CD8-positive, alpha-beta T cell (primary cell): ENCODE measurements at regions of chr5 and their contacts with region 1.

Region 1: GRCh38 chr5:140700177-140701144 is at the start of gene ZMAT2:
- DNase-seq: peak; percentile 84 to 98 (median 91)
- ATAC-seq: peak; percentile 99
- H3K4me3 ChIP-seq: peak within 1 kb of the TSS; percentile 66 to 72
- H3K4me3 Mint-ChIP-seq: peak within 1 kb of the TSS; percentile 95
- H3K27ac ChIP-seq: peak within 1 kb of the TSS; percentile 66 to 78
- H3K27ac Mint-ChIP-seq: peak within 1 kb of the TSS; percentile 96
- H3K4me1 ChIP-seq: peaks cover 13% of the 10 kb centered on the region
- H3K4me1 Mint-ChIP-seq: peaks cover 29% of the 10 kb centered on the region
- H3K27me3 ChIP-seq: no peaks in the 10 kb centered on the region
- H3K27me3 Mint-ChIP-seq: no peaks in the 10 kb centered on the region
- CTCF ChIP-seq: no peak
- total RNA-seq, gene ZMAT2: 31.8 to 36.6 TPM

Region 2: GRCh38 chr5:140547508-140548299 is 152.8 kb before region 1 on chr5 and contains the start of gene EIF4EBP3:
- CTCF ChIA-PET with region 1: no interaction called
- POLR2A ChIA-PET with region 1: interaction called, 5 read pairs
- intact Hi-C with region 1: loop called in 1 of 2 experiments (anchors 5 kb)
- DNase-seq: peak; percentile 74 to 94 (median 88)
- ATAC-seq: peak; percentile 97
- H3K4me3 ChIP-seq: peak within 1 kb of the TSS; percentile 69 to 96
- H3K4me3 Mint-ChIP-seq: peak within 1 kb of the TSS; percentile 90
- H3K27ac ChIP-seq: peak within 1 kb of the TSS; percentile 88 to 96
- H3K27ac Mint-ChIP-seq: peak within 1 kb of the TSS; percentile 98
- H3K4me1 ChIP-seq: peaks cover 21% of the 10 kb centered on the region
- H3K4me1 Mint-ChIP-seq: peaks cover 31% of the 10 kb centered on the region
- H3K27me3 ChIP-seq: no peaks in the 10 kb centered on the region
- H3K27me3 Mint-ChIP-seq: no peaks in the 10 kb centered on the region
- CTCF ChIP-seq: peak; percentile 72
- total RNA-seq, gene EIF4EBP3: 10.6 to 13.7 TPM

Region 3: DNA sequence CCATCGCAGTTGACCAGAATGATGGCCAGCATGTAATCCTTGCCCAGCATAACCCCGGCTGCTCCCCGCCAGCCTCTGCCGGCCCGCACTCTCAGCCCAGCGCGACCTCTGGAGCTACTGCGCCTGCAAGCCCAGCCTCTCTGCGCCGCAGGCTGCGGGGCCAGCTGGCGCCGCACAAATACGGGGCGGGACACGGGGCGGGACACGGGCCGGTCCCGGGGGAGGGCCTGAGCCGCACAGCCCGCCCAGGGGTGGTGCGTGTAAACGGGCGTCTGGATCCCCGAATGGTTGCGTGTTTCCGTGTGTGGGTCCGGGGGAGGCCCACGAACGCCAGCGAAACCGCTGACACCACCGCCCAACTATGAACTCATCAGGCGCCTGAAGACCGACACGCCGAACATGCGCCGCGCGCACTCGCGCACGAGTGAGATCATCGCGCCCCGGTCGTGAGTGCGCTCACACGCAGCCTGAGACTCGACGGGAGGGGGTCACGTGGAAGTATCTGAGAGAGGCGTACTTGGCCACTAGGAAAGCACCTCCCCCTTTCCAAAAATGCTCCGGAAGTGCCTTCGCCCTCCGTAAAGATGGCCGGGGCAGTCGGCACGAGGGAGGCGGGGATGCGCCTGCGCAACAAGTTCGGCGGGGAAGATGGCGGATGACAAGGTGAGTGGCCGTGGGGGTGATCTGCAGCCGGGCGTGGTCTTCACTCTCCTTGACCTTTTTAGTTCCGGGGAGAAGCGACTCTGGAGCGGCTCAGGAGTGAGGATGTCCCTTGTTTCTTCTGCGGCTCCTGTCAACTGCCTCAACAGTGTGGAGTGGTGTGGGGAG is 136.1 kb before region 1 on chr5 and contains the starts of genes APBB3 and SLC35A4:
- CTCF ChIA-PET with region 1: no interaction called
- POLR2A ChIA-PET with region 1: no interaction called
- intact Hi-C with region 1: loop called in 1 of 2 experiments (anchors 1 kb)
- DNase-seq: peak; percentile 92 to 100 (median 95)
- ATAC-seq: peak; percentile 88
- H3K4me3 ChIP-seq: peak within 1 kb of the TSS; percentile 52 to 79
- H3K4me3 Mint-ChIP-seq: peak within 1 kb of the TSS; percentile 88
- H3K27ac ChIP-seq: peak within 1 kb of the TSS; percentile 73 to 92
- H3K27ac Mint-ChIP-seq: peak within 1 kb of the TSS; percentile 94
- H3K4me1 ChIP-seq: peaks cover 30% of the 10 kb centered on the region
- H3K4me1 Mint-ChIP-seq: peaks cover 62% of the 10 kb centered on the region
- H3K27me3 ChIP-seq: no peaks in the 10 kb centered on the region
- H3K27me3 Mint-ChIP-seq: no peaks in the 10 kb centered on the region
- CTCF ChIP-seq: no peak
- total RNA-seq, gene APBB3: 51.0 to 51.7 TPM
- total RNA-seq, gene SLC35A4: 14.8 to 19.4 TPM

Region 4: GRCh38 chr5:140664359-140665119 is 35.9 kb before region 1 on chr5 and contains the start of gene WDR55:
- CTCF ChIA-PET with region 1: no interaction called
- POLR2A ChIA-PET with region 1: no interaction called
- intact Hi-C with region 1: loop called in 1 of 2 experiments (anchors 1 kb)
- DNase-seq: peak; percentile 90 to 98 (median 97)
- ATAC-seq: peak; percentile 92
- H3K4me3 ChIP-seq: peak within 1 kb of the TSS; percentile 80 to 95
- H3K4me3 Mint-ChIP-seq: peak within 1 kb of the TSS; percentile 89
- H3K27ac ChIP-seq: peak within 1 kb of the TSS; percentile 90 to 91
- H3K27ac Mint-ChIP-seq: peak within 1 kb of the TSS; percentile 96
- H3K4me1 ChIP-seq: peaks cover 15% of the 10 kb centered on the region
- H3K4me1 Mint-ChIP-seq: peaks cover 38% of the 10 kb centered on the region
- H3K27me3 ChIP-seq: no peaks in the 10 kb centered on the region
- H3K27me3 Mint-ChIP-seq: no peaks in the 10 kb centered on the region
- CTCF ChIP-seq: no peak
- total RNA-seq, gene WDR55: 45.4 to 49.2 TPM

Region 5: DNA sequence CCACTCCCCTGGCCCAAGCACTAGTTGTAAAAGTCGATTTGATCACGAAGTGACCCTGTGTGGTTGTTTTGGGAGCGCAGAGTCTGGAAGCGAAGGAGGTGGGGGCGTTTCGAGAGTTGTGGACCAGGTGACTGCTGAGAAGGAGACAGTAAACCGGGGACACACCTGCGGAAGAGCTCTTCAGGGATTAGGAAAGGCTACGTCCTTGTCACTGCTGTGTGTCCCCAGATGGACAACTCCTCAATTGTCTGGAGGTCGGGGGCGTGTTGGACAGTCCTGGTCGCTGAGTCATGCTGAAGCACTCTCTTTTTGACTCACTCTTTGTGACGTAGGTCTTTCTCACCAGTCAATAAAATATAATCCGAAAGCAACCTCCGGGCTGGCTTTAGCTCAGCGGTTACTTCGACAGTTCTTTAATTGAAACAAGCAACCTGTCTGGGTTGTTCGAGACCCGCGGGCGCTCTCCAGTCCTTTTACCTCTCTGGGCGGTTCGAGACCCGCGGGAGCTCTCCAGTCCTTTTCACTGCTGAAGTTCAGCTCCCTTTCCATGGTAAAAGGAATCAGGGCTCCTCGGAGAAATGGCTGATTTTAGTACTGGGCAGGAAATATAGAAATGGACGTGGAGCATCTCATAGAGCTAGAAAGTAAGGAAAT is 10.6 kb after region 1 on chr5:
- CTCF ChIA-PET with region 1: interaction called, 4 read pairs
- POLR2A ChIA-PET with region 1: interaction called, 21 read pairs
- intact Hi-C with region 1: loop called (anchors 1 kb)
- DNase-seq: peak; percentile 66 to 95 (median 85)
- ATAC-seq: peak; percentile 83
- H3K4me3 ChIP-seq: peak overlapping the region; percentile 58 to 74
- H3K4me3 Mint-ChIP-seq: peak overlapping the region; percentile 99
- H3K27ac ChIP-seq: peak overlapping the region; percentile 72 to 86
- H3K27ac Mint-ChIP-seq: peak overlapping the region; percentile 99
- H3K4me1 ChIP-seq: no peaks in the 10 kb centered on the region
- H3K4me1 Mint-ChIP-seq: peaks cover 16% of the 10 kb centered on the region
- H3K27me3 ChIP-seq: no peaks in the 10 kb centered on the region
- H3K27me3 Mint-ChIP-seq: no peaks in the 10 kb centered on the region
- CTCF ChIP-seq: no peak

Region 6: DNA sequence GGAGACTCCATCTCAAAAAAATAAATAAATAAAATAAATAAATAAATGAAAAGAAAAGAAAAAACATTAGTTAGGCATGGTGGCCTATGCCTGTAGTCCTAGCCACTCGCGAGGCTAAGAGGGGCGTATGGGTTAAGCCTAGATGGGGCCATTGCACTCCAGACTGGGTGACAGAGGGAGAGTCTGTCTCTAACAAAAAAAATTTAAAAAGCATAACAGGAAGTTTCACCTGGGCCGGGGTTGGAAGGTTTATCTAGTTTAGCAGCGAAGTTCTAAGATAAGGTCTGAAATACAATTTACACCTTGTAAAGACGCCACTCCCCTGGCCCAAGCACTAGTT is 17.8 kb after region 1 on chr5:
- CTCF ChIA-PET with region 1: interaction called, 10 read pairs
- POLR2A ChIA-PET with region 1: no interaction called
- intact Hi-C with region 1: no loop called
- DNase-seq: no peak
- ATAC-seq: no peak
- H3K4me3 ChIP-seq: no peak overlapping the region
- H3K4me3 Mint-ChIP-seq: no peak overlapping the region
- H3K27ac ChIP-seq: no peak overlapping the region
- H3K27ac Mint-ChIP-seq: no peak overlapping the region
- H3K4me1 ChIP-seq: no peaks in the 10 kb centered on the region
- H3K4me1 Mint-ChIP-seq: peaks cover 2% of the 10 kb centered on the region
- H3K27me3 ChIP-seq: no peaks in the 10 kb centered on the region
- H3K27me3 Mint-ChIP-seq: peaks cover 2% of the 10 kb centered on the region
- CTCF ChIP-seq: no peak

Region 7: DNA sequence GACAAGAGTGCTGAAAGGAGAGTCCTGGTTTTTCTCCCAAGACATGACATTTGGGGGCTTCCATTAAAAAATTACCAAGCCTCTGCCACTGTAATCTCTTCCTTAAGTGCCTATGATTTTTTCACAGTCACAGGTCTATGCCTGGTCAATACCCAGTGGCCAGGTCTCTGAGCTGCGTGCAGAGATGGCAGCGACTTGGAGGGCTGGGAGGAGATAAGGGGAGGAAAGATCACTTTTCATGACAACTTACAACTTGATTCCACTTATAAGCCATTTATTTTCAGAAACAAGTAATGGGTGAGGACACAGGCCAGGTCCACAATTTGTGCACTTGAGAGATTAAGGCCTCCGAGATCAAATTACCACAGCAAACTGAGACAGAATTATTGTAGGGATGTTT is 263.9 kb after region 1 on chr5:
- CTCF ChIA-PET with region 1: no interaction called
- POLR2A ChIA-PET with region 1: no interaction called
- intact Hi-C with region 1: no loop called
- DNase-seq: no peak
- ATAC-seq: no peak
- H3K4me3 ChIP-seq: no peak overlapping the region
- H3K4me3 Mint-ChIP-seq: no peak overlapping the region
- H3K27ac ChIP-seq: no peak overlapping the region
- H3K27ac Mint-ChIP-seq: no peak overlapping the region
- H3K4me1 ChIP-seq: no peaks in the 10 kb centered on the region
- H3K4me1 Mint-ChIP-seq: peaks cover 3% of the 10 kb centered on the region
- H3K27me3 ChIP-seq: no peaks in the 10 kb centered on the region
- H3K27me3 Mint-ChIP-seq: peaks cover 33% of the 10 kb centered on the region
- CTCF ChIP-seq: no peak

Region 8: GRCh38 chr5:141192110-141192732 is 491.8 kb after region 1 on chr5 and contains the start of gene PCDHB10:
- CTCF ChIA-PET with region 1: no interaction called
- POLR2A ChIA-PET with region 1: no interaction called
- intact Hi-C with region 1: no loop called
- DNase-seq: peak in 2 of 9 experiments; percentile 20 to 22
- ATAC-seq: no peak
- H3K4me3 ChIP-seq: no peak within 1 kb of the TSS
- H3K4me3 Mint-ChIP-seq: no peak within 1 kb of the TSS
- H3K27ac ChIP-seq: no peak within 1 kb of the TSS
- H3K27ac Mint-ChIP-seq: no peak within 1 kb of the TSS
- H3K4me1 ChIP-seq: no peaks in the 10 kb centered on the region
- H3K4me1 Mint-ChIP-seq: peaks cover under 1% of the 10 kb centered on the region
- H3K27me3 ChIP-seq: peaks cover 0 to 3% of the 10 kb centered on the region in 2 experiments
- H3K27me3 Mint-ChIP-seq: peaks cover 41% of the 10 kb centered on the region
- CTCF ChIP-seq: no peak
- total RNA-seq, gene PCDHB10: not detected

Region 9: GRCh38 chr5:141636413-141637122 is 936.1 kb after region 1 on chr5 and contains the starts of genes HDAC3 and RELL2:
- CTCF ChIA-PET with region 1: no interaction called
- POLR2A ChIA-PET with region 1: no interaction called
- intact Hi-C with region 1: loop called in 1 of 2 experiments (anchors 10 kb)
- DNase-seq: peak; percentile 88 to 97 (median 94)
- ATAC-seq: peak; percentile 89
- H3K4me3 ChIP-seq: peak within 1 kb of the TSS; percentile 98 to 99
- H3K4me3 Mint-ChIP-seq: peak within 1 kb of the TSS; percentile 92
- H3K27ac ChIP-seq: peak within 1 kb of the TSS; percentile 78 to 81
- H3K27ac Mint-ChIP-seq: peak within 1 kb of the TSS; percentile 89
- H3K4me1 ChIP-seq: peaks cover 28% of the 10 kb centered on the region
- H3K4me1 Mint-ChIP-seq: peaks cover 50% of the 10 kb centered on the region
- H3K27me3 ChIP-seq: no peaks in the 10 kb centered on the region
- H3K27me3 Mint-ChIP-seq: no peaks in the 10 kb centered on the region
- CTCF ChIP-seq: no peak
- total RNA-seq, gene HDAC3: 48.9 to 54.8 TPM
- total RNA-seq, gene RELL2: 9.5 to 9.8 TPM

Region 10: GRCh38 chr5:141757402-141757801 is 1056.9 kb after region 1 on chr5:
- CTCF ChIA-PET with region 1: no interaction called
- POLR2A ChIA-PET with region 1: no interaction called
- intact Hi-C with region 1: no loop called
- DNase-seq: no peak
- ATAC-seq: no peak
- H3K4me3 ChIP-seq: no peak overlapping the region
- H3K4me3 Mint-ChIP-seq: no peak overlapping the region
- H3K27ac ChIP-seq: no peak overlapping the region
- H3K27ac Mint-ChIP-seq: no peak overlapping the region
- H3K4me1 ChIP-seq: no peaks in the 10 kb centered on the region
- H3K4me1 Mint-ChIP-seq: peaks cover 8% of the 10 kb centered on the region
- H3K27me3 ChIP-seq: peaks cover 3 to 19% of the 10 kb centered on the region in 2 experiments
- H3K27me3 Mint-ChIP-seq: peaks cover 60% of the 10 kb centered on the region
- CTCF ChIP-seq: no peak